ENCODE measurements at regions of chr18 and their contacts with region 1.

Region 1: DNA sequence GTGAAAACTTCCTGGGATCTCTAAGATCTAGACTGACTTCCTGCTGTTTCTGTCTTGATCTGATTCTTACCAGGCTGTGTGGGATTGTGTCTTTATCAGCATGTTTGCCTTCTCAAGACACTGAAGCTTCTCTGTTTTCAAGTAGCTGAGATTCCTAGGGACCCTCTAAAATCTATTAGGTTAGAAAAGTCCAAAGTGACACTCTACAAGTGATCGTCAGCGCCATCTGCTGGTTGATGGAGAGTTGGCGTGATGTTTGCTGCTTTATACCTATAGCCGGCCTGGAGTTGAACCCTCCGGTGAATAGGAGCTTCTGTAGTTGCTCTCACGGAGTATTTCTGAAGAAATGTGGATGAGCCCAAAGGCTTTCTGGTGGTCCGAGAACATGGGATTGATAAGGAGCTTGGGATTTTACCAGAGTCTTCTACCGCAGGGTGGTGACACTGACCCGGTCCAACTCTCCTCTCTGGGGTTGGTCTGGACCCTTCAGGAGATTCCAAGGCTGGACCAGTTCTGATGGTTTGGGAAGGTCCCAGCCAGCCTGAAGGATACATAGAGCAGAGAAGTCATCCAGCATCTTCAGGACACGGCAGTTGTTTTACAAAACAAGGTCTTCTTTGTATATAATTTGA is 96.0 kb upstream of the TTC39C start:
- DNase-seq: peak; percentile 35 to 89 (median 66)
- ATAC-seq: peak in 3 of 4 donors; percentile 82 to 88 (median 87)
- H3K4me3 ChIP-seq: no peak overlapping the region
- H3K27ac ChIP-seq: no peak overlapping the region
- H3K4me1 ChIP-seq: no peaks in the 10 kb centered on the region
- H3K27me3 ChIP-seq: no peaks in the 10 kb centered on the region
- CTCF ChIP-seq: peak; percentile 77 to 84 (median 81)

Region 2: DNA sequence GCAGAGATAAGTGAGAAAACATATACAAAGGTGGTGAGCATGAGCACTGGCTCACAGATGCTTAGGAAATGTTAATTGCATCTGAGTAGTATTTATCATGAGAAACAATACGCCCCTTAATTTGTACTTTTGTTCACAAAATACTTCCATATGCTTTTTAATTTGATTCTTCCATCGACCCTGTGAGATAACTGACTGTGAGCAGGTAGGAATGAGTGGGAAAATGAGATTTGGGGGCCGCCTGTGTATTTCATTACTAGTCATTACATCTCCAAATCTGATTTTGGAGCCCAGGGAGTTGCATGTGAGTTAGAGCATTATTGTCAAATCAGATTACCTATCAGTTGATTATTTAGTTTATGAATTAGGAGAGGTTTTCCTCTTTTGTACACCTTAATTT is 295.5 kb before region 1 on chr18:
- intact Hi-C with region 1: loop called in 1 of 3 experiments (anchors 5 kb)
- DNase-seq: no peak
- ATAC-seq: no peak
- H3K4me3 ChIP-seq: no peak overlapping the region
- H3K27ac ChIP-seq: no peak overlapping the region
- H3K4me1 ChIP-seq: peaks cover 0 to 8% (median 5%) of the 10 kb centered on the region in 3 donors
- H3K27me3 ChIP-seq: no peaks in the 10 kb centered on the region
- CTCF ChIP-seq: no peak

Region 3: DNA sequence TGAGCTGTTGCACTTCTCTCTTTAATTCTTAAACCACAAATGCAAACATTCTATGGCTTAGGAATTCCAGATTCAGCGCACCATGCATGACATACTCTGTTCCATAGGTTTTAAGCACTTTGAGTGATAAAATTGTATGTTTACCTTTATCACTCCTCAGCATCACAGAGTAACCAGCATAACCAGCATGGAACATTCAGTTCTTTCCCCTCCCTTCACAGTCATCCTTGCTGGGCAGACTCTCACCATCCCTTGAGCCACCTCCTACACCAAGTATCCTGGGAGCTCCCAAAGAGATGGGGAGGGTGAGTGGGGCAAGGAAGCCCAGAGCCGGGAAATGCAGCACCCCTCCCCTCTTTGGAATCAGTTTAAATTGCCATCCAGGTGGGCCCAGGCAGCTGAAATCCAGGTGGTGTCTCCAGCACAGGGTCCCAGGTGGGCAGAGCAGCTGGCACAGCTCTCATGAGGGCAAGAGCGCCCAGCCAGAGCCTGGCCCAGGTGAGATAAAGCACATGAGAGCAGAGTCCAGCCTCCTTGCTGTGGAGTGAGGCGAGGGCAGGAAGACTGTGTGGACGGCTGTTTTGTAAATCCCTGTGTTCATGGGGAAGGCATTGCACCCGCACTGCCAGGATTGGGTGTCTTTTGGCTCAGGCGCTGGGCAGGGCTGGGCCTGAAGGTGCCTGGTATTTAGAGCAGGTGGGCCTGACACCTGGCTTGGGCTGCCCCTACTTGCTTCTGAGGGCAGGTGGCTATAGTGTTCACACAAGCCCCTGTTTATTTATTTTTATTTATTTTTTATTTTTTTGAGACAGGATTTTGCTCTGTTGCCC is 192.5 kb before region 1 on chr18:
- intact Hi-C with region 1: no loop called
- DNase-seq: no peak
- ATAC-seq: no peak
- H3K4me3 ChIP-seq: no peak overlapping the region
- H3K27ac ChIP-seq: no peak overlapping the region
- H3K4me1 ChIP-seq: peaks cover 0 to 3% (median 0%) of the 10 kb centered on the region in 3 donors
- H3K27me3 ChIP-seq: no peaks in the 10 kb centered on the region
- CTCF ChIP-seq: no peak

Region 4: GRCh38 chr18:23967321-23968089 is 49.0 kb after region 1 on chr18:
- intact Hi-C with region 1: no loop called
- DNase-seq: no peak
- ATAC-seq: peak in 3 of 4 donors; percentile 13 to 18 (median 15)
- H3K4me3 ChIP-seq: no peak overlapping the region
- H3K27ac ChIP-seq: no peak overlapping the region
- H3K4me1 ChIP-seq: peaks cover 8 to 19% (median 13%) of the 10 kb centered on the region in 3 donors
- H3K27me3 ChIP-seq: no peaks in the 10 kb centered on the region
- CTCF ChIP-seq: no peak

Region 5: DNA sequence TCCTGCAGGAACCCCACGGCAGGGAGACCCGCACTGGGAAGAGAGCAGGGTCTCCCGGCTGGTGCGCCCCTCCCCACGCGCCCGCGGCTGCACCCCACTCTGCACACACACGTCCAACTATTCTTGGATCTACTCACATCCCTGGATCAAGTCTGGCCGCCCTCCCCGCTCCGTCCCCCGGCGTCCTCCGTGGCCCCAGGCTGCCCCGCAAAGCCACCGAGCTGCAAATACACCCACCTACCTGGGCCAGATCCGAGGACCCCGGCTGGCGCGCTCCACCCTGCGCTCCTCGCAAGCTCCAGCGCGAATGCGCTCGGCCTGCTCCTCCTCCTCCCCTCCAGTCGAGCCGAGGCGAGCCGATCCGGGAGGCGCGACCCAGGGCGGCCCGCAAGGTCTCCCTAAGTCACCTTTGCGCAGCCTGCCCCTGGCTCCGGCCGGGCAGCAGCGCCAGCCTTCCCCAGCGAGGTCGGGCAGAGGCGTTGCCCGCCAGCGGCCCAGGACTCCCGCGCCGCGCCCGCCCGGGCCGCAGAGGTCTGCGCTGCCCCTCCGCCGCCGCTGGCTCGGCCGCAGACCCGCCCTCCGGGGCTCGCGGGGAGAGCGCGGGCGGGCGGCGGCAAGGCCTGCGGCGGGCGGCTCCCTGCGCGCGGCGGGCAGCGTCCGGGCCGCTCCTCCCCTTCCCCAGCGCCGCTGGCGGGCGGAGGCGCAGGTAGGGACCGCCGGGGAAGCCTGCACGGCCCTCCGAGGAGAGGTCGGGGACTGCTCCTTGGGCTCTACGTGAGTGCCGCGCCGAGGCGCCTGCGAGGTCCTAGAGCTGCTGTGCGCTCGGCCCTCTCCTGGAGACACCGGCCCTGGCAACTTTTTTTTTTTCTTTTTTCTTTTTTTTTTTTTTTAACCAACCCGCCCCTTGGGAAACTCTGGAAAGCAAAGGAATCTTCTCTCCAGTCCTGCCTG is 353.1 kb after region 1 on chr18:
- intact Hi-C with region 1: no loop called
- DNase-seq: peak; percentile 75 to 92 (median 80)
- ATAC-seq: peak; percentile 83 to 90 (median 87)
- H3K4me3 ChIP-seq: peak overlapping the region; percentile 72 to 81 (median 72)
- H3K27ac ChIP-seq: peak overlapping the region; percentile 61 to 94 (median 84)
- H3K4me1 ChIP-seq: peaks cover 0 to 11% (median 3%) of the 10 kb centered on the region in 3 donors
- H3K27me3 ChIP-seq: no peaks in the 10 kb centered on the region
- CTCF ChIP-seq: no peak